ENCODE measurements at regions of chr11 and their contacts with region 1.

Region 1: DNA sequence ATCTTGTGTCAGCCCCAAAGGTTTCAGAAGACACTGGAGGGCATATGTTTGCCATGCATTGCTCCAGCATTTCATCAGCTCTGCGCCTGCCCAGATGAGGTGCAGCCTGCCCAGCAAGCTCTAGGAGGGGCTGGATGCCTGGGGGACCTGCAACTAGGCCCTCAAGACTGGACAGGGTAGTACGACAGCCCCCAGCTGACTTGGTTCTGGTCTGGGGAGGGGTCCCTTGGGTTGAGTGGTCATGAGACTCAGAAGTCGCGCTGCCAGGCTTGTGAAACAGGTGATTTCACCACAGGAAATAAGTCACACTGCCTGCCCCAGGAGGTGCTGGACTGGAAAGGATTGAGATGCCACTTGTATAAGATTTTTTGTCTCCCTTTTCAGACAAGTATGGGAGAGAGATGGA is 23.4 kb downstream of the TPBGL start:
- DNase-seq: no peak

Region 2: DNA sequence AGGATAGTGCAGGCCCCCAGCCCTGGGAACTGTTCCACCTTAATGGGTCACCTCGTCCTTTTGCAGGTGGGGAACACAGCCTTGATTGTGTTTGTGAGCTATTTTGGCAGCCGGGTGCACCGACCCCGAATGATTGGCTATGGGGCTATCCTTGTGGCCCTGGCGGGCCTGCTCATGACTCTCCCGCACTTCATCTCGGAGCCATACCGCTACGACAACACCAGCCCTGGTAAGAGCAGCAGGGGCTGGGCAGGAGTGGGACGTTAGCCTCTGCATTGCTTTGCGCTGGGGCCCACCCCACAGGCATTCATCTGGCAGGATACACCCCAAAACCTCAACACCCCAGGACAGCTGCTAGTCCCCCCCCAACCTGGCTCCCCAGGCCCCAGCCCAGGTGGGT is 98.2 kb before region 1 on chr11:
- CTCF ChIA-PET with region 1: interaction called, 10 read pairs
- POLR2A ChIA-PET with region 1: no interaction called
- DNase-seq: no peak

Region 3: GRCh38 chr11:75248690-75249268 is 15.2 kb before region 1 on chr11:
- CTCF ChIA-PET with region 1: interaction called, 14 read pairs
- POLR2A ChIA-PET with region 1: no interaction called
- DNase-seq: peak; percentile 86

Region 4: DNA sequence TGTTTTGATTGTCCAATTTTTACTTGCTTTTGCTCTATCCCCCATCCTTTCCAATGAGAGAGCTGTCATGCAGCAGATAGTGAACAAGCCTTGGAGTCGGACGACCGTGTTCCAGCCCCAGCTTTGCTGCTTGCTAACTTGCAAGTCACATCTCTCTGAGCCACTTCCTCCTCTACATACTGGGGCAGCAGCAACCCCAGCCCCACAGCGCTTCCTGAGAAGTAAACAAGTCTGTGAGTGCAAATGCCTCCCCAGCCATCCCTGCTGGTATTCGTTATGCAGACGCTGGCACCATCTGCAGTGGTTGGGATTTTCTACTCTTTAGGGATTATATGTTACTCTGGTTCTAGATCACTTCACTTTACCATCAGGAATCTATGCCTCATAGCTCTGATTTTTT is 11.6 kb after region 1 on chr11:
- CTCF ChIA-PET with region 1: no interaction called
- POLR2A ChIA-PET with region 1: no interaction called
- DNase-seq: no peak

Measured in HEK293T (cell line).